ENCODE measurements at regions of chr1 and their contacts with region 1.

Region 1: GRCh38 chr1:242454262-242455045 is 70.0 kb downstream of the PLD5 start:
- DNase-seq: no peak
- H3K4me3 ChIP-seq: no peak overlapping the region
- H3K4me3 Mint-ChIP-seq: no peak overlapping the region
- H3K27ac ChIP-seq: no peak overlapping the region
- H3K27ac Mint-ChIP-seq: no peak overlapping the region
- H3K4me1 ChIP-seq: no peaks in the 10 kb centered on the region
- H3K4me1 Mint-ChIP-seq: peaks cover 0 to 2% (median 0%) of the 10 kb centered on the region in 4 donors
- H3K27me3 ChIP-seq: no peaks in the 10 kb centered on the region
- H3K27me3 Mint-ChIP-seq: peaks cover 6 to 7% of the 10 kb centered on the region in 2 donors

Region 2: GRCh38 chr1:242412921-242413320 is 41.5 kb before region 1 on chr1:
- CTCF ChIA-PET with region 1: no interaction called
- POLR2A ChIA-PET with region 1: no interaction called
- intact Hi-C with region 1: no loop called
- DNase-seq: no peak
- H3K4me3 ChIP-seq: no peak overlapping the region
- H3K4me3 Mint-ChIP-seq: no peak overlapping the region
- H3K27ac ChIP-seq: no peak overlapping the region
- H3K27ac Mint-ChIP-seq: no peak overlapping the region
- H3K4me1 ChIP-seq: no peaks in the 10 kb centered on the region
- H3K4me1 Mint-ChIP-seq: no peaks in the 10 kb centered on the region
- H3K27me3 ChIP-seq: no peaks in the 10 kb centered on the region
- H3K27me3 Mint-ChIP-seq: no peaks in the 10 kb centered on the region

Region 3: DNA sequence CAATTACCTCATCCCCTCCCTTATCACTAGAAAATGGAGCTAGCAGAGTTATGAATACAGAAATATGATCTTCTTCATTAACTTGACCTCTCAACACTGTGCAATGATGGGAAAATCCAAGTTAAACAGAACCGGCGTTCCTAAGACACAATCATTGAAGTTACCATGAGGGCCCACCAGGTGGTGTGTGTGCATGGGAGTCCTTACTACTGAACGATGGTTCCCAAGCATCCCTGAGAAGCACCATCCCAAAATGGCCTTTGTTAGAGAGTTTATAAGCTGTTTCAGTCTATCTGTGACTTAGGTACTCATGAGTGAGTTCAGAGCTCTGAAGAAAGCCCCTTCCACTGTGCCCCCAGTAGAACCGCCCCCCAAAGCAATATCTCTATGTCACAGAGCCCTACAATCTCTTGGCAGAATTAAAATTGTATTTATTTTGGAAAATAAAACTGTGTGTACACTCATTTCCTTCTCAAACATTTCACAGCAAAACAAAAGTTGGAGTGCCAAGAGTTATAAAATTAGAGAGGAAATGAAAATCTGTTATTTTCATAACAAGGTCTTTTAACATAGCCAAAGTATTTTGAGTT is 13.2 kb after region 1 on chr1:
- CTCF ChIA-PET with region 1: interaction called, 11 read pairs
- POLR2A ChIA-PET with region 1: no interaction called
- intact Hi-C with region 1: no loop called
- DNase-seq: peak in 1 of 5 donors; percentile 9
- H3K4me3 ChIP-seq: no peak overlapping the region
- H3K4me3 Mint-ChIP-seq: no peak overlapping the region
- H3K27ac ChIP-seq: no peak overlapping the region
- H3K27ac Mint-ChIP-seq: no peak overlapping the region
- H3K4me1 ChIP-seq: no peaks in the 10 kb centered on the region
- H3K4me1 Mint-ChIP-seq: no peaks in the 10 kb centered on the region
- H3K27me3 ChIP-seq: no peaks in the 10 kb centered on the region
- H3K27me3 Mint-ChIP-seq: peaks cover 2 to 4% of the 10 kb centered on the region in 2 donors

Region 4: GRCh38 chr1:243325305-243325890 is 870.9 kb after region 1 on chr1:
- CTCF ChIA-PET with region 1: interaction called, 10 read pairs
- POLR2A ChIA-PET with region 1: no interaction called
- intact Hi-C with region 1: loop called (anchors 1 kb)
- DNase-seq: peak in 4 of 5 donors; percentile 35 to 53 (median 47)
- H3K4me3 ChIP-seq: no peak overlapping the region
- H3K4me3 Mint-ChIP-seq: no peak overlapping the region
- H3K27ac ChIP-seq: no peak overlapping the region
- H3K27ac Mint-ChIP-seq: no peak overlapping the region
- H3K4me1 ChIP-seq: no peaks in the 10 kb centered on the region
- H3K4me1 Mint-ChIP-seq: no peaks in the 10 kb centered on the region
- H3K27me3 ChIP-seq: no peaks in the 10 kb centered on the region
- H3K27me3 Mint-ChIP-seq: no peaks in the 10 kb centered on the region